ENCODE measurements at regions of chr4 and their contacts with region 1.

Region 1: DNA sequence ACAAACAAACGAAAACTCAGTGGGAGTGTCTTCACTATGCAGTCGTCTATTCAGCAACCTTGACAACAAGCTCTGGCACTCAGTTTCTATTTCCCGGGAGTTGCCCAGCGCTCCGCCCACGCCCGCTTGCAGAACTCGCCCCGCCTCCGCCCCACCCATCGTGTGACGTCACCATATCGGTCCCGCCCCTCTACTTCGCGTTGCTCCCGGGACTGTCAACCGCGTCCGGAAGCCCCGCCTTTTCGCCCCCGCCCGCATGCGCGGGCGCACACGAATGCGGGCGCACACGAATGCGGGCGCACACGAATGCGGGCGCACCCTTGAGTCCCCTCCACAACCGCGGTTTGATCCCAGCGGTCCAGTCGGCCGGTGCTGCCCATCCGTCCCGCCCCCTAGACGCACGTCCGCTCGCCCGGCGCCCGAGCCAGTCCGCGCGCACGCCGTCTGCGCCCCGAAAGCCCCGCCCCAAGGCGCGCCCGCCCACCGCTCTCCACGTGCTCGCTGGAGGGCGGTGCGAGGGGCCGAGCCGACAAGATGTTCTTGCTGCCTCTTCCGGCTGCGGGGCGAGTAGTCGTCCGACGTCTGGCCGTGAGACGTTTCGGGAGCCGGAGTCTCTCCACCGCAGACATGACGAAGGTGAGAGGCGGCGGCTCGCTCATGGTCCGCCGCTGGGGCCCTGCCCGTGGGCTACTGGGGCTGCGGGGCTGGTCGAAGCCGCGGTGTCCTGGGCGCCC is at the start of gene LAP3:
- DNase-seq: peak; percentile 98
- H3K4me3 Mint-ChIP-seq: peak within 1 kb of the TSS; percentile 86
- H3K27ac Mint-ChIP-seq: peak within 1 kb of the TSS; percentile 99
- H3K4me1 Mint-ChIP-seq: peaks cover 43% of the 10 kb centered on the region
- H3K27me3 Mint-ChIP-seq: no peaks in the 10 kb centered on the region
- total RNA-seq, gene LAP3: 142 to 149 TPM

Region 2: GRCh38 chr4:17529452-17529964 is 47.6 kb before region 1 on chr4:
- CTCF ChIA-PET with region 1: no interaction called
- POLR2A ChIA-PET with region 1: no interaction called
- DNase-seq: no peak
- H3K4me3 Mint-ChIP-seq: no peak overlapping the region
- H3K27ac Mint-ChIP-seq: no peak overlapping the region
- H3K4me1 Mint-ChIP-seq: no peaks in the 10 kb centered on the region
- H3K27me3 Mint-ChIP-seq: peaks cover 17% of the 10 kb centered on the region

Region 3: DNA sequence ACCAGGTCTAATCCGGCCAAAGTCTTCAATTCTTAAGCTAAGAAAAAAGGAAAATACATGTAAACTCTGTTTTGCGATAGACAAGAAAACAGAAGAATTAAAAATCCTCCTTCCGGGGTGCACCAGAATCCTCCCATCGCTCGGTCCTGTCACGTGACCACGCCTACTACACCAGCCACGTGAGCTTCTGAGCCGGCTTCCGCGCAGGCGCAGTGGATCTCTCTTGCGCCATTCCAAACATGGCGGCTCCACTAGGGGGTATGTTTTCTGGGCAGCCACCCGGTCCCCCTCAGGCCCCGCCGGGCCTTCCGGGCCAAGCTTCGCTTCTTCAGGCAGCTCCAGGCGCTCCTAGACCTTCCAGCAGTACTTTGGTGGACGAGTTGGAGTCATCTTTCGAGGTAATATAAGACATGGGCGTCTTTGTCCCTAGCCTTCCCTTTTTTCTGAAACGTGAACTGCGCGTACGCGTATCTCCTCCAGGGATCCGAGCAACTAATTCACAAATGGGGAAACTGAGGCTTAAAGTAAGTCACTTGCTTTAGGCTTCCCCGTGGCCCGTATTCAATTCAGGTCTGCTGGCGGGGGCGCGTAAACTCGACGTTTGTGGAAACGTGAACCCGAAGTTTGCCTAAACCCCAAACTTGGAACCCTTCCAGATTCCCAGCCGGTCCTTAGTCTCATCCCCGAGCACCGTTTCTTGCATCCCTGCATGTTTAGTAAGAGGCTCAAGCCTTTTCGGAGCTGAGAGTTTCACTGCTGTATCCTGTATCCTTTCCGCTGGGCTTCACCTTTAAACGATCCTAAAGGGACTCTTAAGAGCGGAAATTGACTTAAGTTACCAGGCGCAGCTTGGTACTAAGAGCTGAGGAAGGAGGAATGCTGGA is 37.6 kb after region 1 on chr4 and contains the start of gene MED28:
- CTCF ChIA-PET with region 1: interaction called, 4 read pairs
- POLR2A ChIA-PET with region 1: interaction called, 15 read pairs
- DNase-seq: peak; percentile 97
- H3K4me3 Mint-ChIP-seq: peak within 1 kb of the TSS; percentile 92
- H3K27ac Mint-ChIP-seq: peak within 1 kb of the TSS; percentile 95
- H3K4me1 Mint-ChIP-seq: peaks cover 42% of the 10 kb centered on the region
- H3K27me3 Mint-ChIP-seq: no peaks in the 10 kb centered on the region
- total RNA-seq, gene MED28: 53.7 to 53.8 TPM